ENCODE measurements at regions of chr17 and their contacts with region 1.

Region 1: GRCh38 chr17:76121932-76122430 is 18.4 kb upstream of the EXOC7 start:
- DNase-seq: peak; percentile 69
- H3K4me3 Mint-ChIP-seq: peak overlapping the region; percentile 47
- H3K27ac Mint-ChIP-seq: peak overlapping the region; percentile 72
- H3K4me1 Mint-ChIP-seq: peaks cover 24% of the 10 kb centered on the region
- H3K27me3 Mint-ChIP-seq: no peaks in the 10 kb centered on the region

Region 2: GRCh38 chr17:76088036-76088867 is 33.7 kb before region 1 on chr17:
- intact Hi-C with region 1: no loop called
- DNase-seq: no peak
- H3K4me3 Mint-ChIP-seq: no peak overlapping the region
- H3K27ac Mint-ChIP-seq: no peak overlapping the region
- H3K4me1 Mint-ChIP-seq: peaks cover 3% of the 10 kb centered on the region
- H3K27me3 Mint-ChIP-seq: no peaks in the 10 kb centered on the region

Region 3: DNA sequence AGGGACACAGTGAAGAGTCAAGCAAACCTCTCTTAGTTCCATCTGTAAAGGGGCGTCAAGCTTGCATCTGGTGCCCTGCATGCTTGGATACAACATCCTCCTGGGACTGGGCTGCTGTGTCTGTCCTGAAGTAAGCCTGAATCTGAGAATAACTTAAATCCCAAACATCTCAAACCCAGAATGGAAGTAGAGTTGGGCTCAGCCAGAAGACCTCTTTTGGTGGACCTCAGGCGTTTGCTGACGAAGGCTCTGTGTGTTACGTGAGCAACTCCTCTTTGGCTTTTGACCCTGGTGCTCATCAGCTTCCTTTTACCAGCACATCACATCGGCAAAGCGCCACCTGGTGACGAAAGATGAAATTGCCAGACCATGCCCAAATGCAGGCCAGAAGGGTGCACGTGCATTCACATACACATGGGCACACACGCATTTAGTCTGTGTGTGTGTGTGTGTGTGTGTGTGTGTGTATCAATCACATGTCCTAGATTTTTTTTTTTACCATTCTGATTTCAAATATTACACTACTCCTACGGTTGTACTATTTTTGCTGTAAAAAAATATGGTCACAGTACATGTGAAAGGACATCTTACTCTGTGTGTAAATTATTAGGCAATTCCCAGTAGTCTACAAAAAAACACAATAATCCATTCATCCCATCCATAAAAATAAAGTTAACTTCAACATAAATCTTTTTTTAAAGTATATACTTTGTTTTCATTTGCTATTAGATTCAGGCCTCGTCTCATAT is 60.2 kb after region 1 on chr17:
- intact Hi-C with region 1: loop called (anchors 2 kb)
- DNase-seq: peak; percentile 98
- H3K4me3 Mint-ChIP-seq: peak overlapping the region; percentile 66
- H3K27ac Mint-ChIP-seq: peak overlapping the region; percentile 92
- H3K4me1 Mint-ChIP-seq: peaks cover 53% of the 10 kb centered on the region
- H3K27me3 Mint-ChIP-seq: no peaks in the 10 kb centered on the region

Region 4: DNA sequence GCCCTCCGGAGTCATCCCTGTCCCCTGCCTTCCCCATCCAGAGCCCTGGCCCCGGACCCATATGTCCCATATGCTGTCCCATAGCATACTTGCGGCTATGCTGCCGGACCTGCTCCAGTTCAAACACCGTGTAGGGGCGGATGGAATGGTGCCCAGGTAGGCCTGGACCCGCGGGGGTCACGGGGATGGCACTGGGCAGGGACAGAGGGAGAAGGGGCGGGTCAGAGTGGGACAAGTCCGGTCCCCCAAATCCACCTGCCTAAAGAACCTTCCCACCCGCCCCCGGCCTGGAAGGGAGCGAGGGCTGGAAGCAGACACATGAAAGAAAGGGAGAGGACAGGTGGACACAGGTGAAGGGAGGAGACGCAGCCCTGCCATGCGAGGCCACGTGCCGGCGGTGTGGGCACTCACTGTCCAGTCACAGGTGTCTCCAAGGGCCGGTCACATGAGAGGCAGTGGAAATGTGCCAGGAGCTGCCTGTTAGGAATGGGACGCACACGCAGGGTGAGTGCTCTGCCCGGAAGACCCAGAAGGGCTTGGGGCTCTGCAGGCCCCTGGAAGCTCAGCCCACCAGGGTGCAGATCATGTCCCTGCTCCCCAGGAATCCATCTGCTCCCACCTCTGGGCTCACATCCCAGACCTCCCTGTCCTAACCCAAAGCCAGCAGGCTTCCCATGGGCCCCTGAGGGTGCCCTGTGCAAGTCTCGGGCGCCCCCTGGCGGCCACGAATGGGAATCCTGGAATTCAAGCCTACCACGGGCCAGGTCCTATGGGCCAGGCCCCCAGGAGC is 157.2 kb after region 1 on chr17:
- intact Hi-C with region 1: loop called (anchors 1 kb)
- DNase-seq: peak; percentile 96
- H3K4me3 Mint-ChIP-seq: no peak overlapping the region
- H3K27ac Mint-ChIP-seq: no peak overlapping the region
- H3K4me1 Mint-ChIP-seq: peaks cover 10% of the 10 kb centered on the region
- H3K27me3 Mint-ChIP-seq: no peaks in the 10 kb centered on the region

Region 5: DNA sequence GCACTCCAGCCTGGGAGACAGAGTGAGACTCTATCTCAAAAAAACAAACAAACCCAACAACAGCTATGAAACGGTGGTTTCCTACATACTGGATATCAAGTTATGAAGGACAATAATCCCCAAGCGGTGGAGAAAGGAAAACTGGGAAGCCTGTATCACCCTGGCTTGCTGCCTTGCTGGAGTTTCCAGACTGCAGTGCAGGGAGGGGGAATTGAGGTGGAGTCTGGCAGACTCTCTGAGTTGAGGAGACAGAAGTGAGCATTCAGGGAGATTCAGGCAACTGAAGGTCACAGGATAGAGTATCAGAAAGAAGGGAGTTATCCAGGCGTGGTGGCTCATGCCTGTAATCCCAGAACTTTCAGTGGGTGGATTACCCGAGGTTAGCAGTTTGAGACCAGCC is 174.2 kb after region 1 on chr17:
- intact Hi-C with region 1: loop called (anchors 5 kb)
- DNase-seq: no peak
- H3K4me3 Mint-ChIP-seq: no peak overlapping the region
- H3K27ac Mint-ChIP-seq: no peak overlapping the region
- H3K4me1 Mint-ChIP-seq: peaks cover 2% of the 10 kb centered on the region
- H3K27me3 Mint-ChIP-seq: no peaks in the 10 kb centered on the region